OCI-LY7 (cell line): ENCODE measurements at regions of chr14 and their contacts with region 1.

Region 1: DNA sequence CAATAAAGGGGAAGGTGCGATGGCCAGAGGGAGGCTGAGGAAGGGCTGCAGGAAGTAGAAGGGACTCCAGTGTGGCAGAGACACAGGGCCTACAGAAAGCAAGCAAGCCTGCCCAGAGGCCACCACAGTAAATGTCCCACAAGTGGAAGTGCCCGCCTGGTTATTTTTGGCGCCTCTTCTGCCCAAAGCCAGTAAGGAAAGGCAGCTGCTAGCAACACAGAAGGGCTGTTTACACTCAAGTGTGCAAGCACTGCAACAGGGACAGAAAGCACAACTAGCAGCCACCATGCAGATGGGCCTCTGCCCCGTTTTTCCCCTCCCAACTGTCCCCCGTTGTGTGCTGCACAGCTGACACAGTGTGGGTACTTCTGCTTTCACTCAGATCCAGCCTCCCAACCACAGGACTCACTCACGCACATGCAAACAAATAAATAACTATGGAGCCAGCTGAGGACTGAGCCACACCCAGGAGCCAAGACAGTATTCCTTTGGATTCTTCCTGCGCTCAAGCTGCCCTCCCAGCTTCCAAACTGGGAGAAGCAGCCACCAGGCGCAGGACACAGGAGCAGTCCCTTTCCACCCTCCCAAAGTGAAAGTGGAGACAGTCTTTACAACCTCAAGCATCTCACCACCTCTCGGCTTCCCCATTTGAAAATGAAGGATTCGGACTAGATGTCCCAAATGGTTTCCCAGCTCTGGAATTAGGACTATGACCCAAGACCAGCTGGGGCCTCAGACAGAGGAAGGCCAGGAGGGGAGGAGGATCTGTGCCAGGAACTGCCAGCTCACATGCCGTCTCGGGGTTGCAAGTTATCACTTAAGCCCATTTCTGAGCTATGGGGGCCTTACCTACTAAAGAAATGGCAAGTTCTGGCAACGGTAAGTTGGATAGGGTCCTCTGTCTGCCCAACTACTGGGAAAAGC is 40.0 kb upstream of the PNMA1 start:
- DNase-seq: peak; percentile 75
- H3K4me3 ChIP-seq: peak overlapping the region; percentile 78
- H3K27ac ChIP-seq: peak overlapping the region; percentile 88
- H3K4me1 ChIP-seq: peaks cover 88% of the 10 kb centered on the region
- CTCF ChIP-seq: no peak

Region 2: GRCh38 chr14:73741386-73741875 is 12.8 kb before region 1 on chr14:
- CTCF ChIA-PET with region 1: interaction called, 5 read pairs
- POLR2A ChIA-PET with region 1: interaction called, 9 read pairs
- intact Hi-C with region 1: loop called (anchors 1 kb)
- DNase-seq: peak; percentile 54
- H3K4me3 ChIP-seq: peak overlapping the region; percentile 58
- H3K27ac ChIP-seq: peak overlapping the region; percentile 70
- H3K4me1 ChIP-seq: peaks cover 58% of the 10 kb centered on the region
- CTCF ChIP-seq: no peak

Region 3: GRCh38 chr14:73777401-73777800 is 23.2 kb after region 1 on chr14:
- CTCF ChIA-PET with region 1: interaction called, 4 read pairs
- POLR2A ChIA-PET with region 1: interaction called, 53 read pairs
- intact Hi-C with region 1: no loop called
- DNase-seq: peak; percentile 71
- H3K4me3 ChIP-seq: no peak overlapping the region
- H3K27ac ChIP-seq: peak overlapping the region; percentile 96
- H3K4me1 ChIP-seq: peaks cover 76% of the 10 kb centered on the region
- CTCF ChIP-seq: peak; percentile 73